ENCODE measurements at regions of chr1 and their contacts with region 1.

Region 1: GRCh38 chr1:10867138-10867721 is 70.8 kb upstream of the CASZ1 start:
- DNase-seq: no peak
- H3K4me3 ChIP-seq: peak overlapping the region; percentile 55
- CTCF ChIP-seq: peak; percentile 34

Region 2: GRCh38 chr1:10507111-10507879 is 359.9 kb before region 1 on chr1:
- CTCF ChIA-PET with region 1: interaction called, 229 read pairs
- POLR2A ChIA-PET with region 1: no interaction called
- DNase-seq: peak; percentile 42
- H3K4me3 ChIP-seq: no peak overlapping the region
- CTCF ChIP-seq: peak; percentile 82

Region 3: GRCh38 chr1:10522322-10522860 is 344.8 kb before region 1 on chr1:
- CTCF ChIA-PET with region 1: interaction called, 42 read pairs
- POLR2A ChIA-PET with region 1: no interaction called
- DNase-seq: no peak
- H3K4me3 ChIP-seq: no peak overlapping the region
- CTCF ChIP-seq: no peak

Region 4: GRCh38 chr1:10530281-10530740 is 336.9 kb before region 1 on chr1:
- CTCF ChIA-PET with region 1: interaction called, 42 read pairs
- POLR2A ChIA-PET with region 1: no interaction called
- DNase-seq: no peak
- H3K4me3 ChIP-seq: peak overlapping the region; percentile 52
- CTCF ChIP-seq: peak; percentile 96

Region 5: DNA sequence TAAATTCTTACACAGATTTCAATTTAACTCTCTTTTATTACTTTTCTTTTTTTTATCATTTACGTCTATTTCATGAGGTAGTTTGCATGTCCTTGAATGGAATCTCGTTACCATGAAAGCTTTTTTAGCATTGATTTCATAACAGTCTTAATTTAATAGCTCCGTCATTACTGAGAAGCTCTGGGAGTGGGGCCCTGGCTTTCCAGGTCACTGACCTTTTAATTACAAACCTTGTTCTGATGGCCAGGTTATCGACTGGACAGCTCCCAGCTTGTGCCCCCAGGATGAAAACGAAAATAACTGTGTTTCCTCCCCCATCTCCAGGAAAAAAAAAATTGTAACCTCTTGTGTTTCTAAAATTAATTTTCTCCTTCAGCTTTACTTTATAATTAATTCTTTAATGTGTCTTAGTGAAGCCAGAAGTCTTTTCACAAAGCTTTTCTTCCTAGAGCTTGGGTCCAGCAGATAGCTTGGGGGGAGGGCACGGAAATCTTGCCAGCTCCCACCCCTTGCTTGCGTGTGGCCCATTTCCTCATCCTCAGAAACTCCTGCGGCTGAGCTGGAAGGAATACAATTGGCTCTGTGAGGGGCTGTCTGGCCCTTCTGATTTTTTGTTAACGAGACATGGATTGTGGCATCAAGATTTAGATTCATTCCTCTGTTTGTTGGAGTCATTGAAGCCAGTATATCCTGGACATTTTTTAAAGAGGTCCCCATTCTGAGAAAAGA is 326.8 kb before region 1 on chr1:
- CTCF ChIA-PET with region 1: interaction called, 13 read pairs
- POLR2A ChIA-PET with region 1: no interaction called
- DNase-seq: no peak
- H3K4me3 ChIP-seq: no peak overlapping the region
- CTCF ChIP-seq: no peak

Region 6: GRCh38 chr1:10888286-10888685 is 21.1 kb after region 1 on chr1:
- CTCF ChIA-PET with region 1: interaction called, 13 read pairs
- POLR2A ChIA-PET with region 1: no interaction called
- DNase-seq: no peak
- H3K4me3 ChIP-seq: no peak overlapping the region
- CTCF ChIP-seq: no peak